ENCODE measurements at regions of chr7 and their contacts with region 1.

Region 1: DNA sequence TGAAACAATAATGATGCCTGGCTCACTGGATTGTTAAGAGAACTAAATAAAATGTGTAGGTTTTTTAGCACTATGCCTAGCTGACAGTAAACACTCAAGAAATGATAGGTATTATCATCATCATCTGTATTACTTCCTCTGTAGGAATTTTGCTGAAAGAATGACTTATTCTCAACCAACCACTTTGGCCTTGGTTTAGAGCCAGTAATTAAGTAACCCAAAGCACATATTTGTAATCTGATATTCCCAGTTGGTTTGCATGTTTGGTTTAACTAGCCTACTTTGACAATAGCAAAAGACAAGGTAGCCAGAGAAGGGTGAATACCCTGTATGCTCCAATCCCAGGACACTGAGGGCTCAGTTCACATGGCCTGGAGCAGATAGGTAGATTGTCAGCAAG is 34.4 kb downstream of the BCAP29 start:
- DNase-seq: no peak
- ATAC-seq: no peak
- H3K4me3 ChIP-seq: no peak overlapping the region
- H3K27ac ChIP-seq: peak overlapping the region in 1 of 10 donors; percentile 37
- H3K4me1 ChIP-seq: peaks cover 0 to 29% (median 12%) of the 10 kb centered on the region in 9 donors
- H3K27me3 ChIP-seq: no peaks in the 10 kb centered on the region
- CTCF ChIP-seq: no peak

Region 2: GRCh38 chr7:107461938-107462533 is 152.4 kb before region 1 on chr7:
- intact Hi-C with region 1: no loop called
- DNase-seq: no peak
- ATAC-seq: peak in 6 of 8 donors; percentile 17 to 78 (median 61)
- H3K4me3 ChIP-seq: no peak overlapping the region
- H3K27ac ChIP-seq: peak overlapping the region in 8 of 10 donors; percentile 8 to 65 (median 51)
- H3K4me1 ChIP-seq: peaks cover 0 to 39% (median 5%) of the 10 kb centered on the region in 9 donors
- H3K27me3 ChIP-seq: no peaks in the 10 kb centered on the region
- CTCF ChIP-seq: no peak

Region 3: DNA sequence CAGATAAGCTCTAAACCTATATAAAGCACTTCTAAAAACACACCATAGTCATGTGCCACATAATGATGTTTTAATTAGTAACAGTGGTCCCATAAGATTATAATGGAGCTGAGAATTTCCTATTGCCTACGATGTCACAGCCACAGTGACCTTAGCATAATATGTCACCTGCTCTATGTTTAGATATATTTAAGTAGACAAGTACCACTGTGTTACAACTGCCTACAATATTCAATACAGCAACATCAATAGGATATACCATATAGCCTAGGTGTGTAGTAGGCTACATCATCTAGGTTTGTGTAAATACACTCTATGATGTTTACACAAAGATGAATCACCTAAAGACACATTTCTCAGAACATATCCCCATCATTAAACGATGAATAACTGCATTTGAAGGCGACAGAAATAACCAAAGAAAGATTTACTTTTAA is 120.1 kb before region 1 on chr7:
- intact Hi-C with region 1: no loop called
- DNase-seq: no peak
- ATAC-seq: peak in 2 of 8 donors; percentile 62 to 68
- H3K4me3 ChIP-seq: no peak overlapping the region
- H3K27ac ChIP-seq: peak overlapping the region in 3 of 10 donors; percentile 8 to 35 (median 10)
- H3K4me1 ChIP-seq: peaks cover 0 to 16% (median 3%) of the 10 kb centered on the region in 9 donors
- H3K27me3 ChIP-seq: no peaks in the 10 kb centered on the region
- CTCF ChIP-seq: no peak

Region 4: DNA sequence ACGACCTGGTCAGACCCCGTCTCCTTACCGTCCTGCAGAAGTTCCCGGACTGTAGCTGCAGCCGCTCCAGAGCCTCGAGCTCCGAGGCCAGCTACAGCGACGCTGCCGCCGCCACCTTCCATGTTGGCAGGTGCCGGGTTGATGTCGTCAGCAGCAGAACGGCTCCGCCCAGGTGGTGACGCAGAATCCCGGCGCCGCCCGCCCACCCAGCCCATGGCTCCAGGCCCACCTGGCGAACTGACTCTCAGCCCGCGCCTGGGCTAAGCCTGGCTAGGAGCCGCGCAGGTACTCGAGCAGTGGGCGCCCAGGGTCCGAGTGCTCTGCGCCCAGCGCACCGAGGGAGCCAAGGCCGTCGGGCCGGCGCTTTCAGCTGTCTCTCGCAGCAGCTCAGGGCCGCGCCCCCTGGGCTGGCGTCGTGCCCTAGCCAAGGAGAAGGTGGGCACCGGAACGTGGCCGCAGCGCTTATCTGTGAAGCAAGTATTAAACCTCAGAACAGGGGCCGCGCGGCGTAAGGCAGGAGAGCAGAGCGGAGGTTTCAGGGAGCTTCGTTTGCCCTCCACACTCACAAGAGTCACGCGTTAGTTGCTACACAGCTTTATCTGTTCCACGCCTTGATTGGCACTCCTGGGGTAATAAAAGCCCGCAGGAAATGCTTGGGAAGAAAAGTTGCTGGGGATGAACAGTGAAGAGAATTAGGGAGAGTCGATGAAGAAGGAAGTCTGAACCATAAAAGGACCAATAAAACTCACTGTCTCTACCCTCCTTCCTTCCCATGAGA is 50.5 kb before region 1 on chr7 and contains the starts of genes COG5 and DUS4L:
- intact Hi-C with region 1: loop called in 1 of 10 experiments (anchors 5 kb)
- DNase-seq: peak; percentile 85 to 86
- ATAC-seq: peak; percentile 94 to 98 (median 96)
- H3K4me3 ChIP-seq: peak within 1 kb of the TSS; percentile 68 to 99 (median 87)
- H3K27ac ChIP-seq: peak within 1 kb of the TSS; percentile 88 to 98 (median 94)
- H3K4me1 ChIP-seq: peaks cover 0 to 57% (median 49%) of the 10 kb centered on the region in 9 donors
- H3K27me3 ChIP-seq: no peaks in the 10 kb centered on the region
- CTCF ChIP-seq: peak in 1 of 9 donors; percentile 3
- total RNA-seq, gene COG5: 44.2 to 65.8 (median 53.0) TPM
- total RNA-seq, gene DUS4L: 6.6 to 10.6 (median 9.0) TPM

Region 5: DNA sequence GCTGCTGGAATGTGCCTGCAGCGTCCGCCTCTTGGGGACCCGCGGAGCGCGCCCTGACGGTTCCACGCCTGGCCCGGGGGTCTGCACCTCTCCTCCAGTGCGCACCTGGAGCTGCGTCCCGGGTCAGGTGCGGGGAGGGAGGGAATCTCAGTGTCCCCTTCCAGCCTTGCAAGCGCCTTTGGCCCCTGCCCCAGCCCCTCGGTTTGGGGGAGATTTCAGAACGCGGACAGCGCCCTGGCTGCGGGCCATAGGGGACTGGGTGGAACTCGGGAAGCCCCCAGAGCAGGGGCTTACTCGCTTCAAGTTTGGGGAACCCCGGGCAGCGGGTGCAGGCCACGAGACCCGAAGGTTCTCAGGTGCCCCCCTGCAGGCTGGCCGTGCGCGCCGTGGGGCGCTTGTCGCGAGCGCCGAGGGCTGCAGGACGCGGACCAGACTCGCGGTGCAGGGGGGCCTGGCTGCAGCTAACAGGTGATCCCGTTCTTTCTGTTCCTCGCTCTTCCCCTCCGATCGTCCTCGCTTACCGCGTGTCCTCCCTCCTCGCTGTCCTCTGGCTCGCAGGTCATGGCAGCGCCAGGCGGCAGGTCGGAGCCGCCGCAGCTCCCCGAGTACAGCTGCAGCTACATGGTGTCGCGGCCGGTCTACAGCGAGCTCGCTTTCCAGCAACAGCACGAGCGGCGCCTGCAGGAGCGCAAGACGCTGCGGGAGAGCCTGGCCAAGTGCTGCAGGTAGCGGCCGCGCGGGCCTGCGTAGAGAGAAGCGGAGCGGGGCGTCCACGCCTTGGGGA is 46.8 kb after region 1 on chr7:
- intact Hi-C with region 1: no loop called
- DNase-seq: peak; percentile 19 to 54
- ATAC-seq: peak; percentile 75 to 91 (median 88)
- H3K4me3 ChIP-seq: peak overlapping the region; percentile 2 to 77 (median 54)
- H3K27ac ChIP-seq: no peak overlapping the region
- H3K4me1 ChIP-seq: peaks cover 0 to 19% (median 11%) of the 10 kb centered on the region in 9 donors
- H3K27me3 ChIP-seq: peaks cover 0 to 55% (median 23%) of the 10 kb centered on the region in 7 donors
- CTCF ChIP-seq: peak in 5 of 9 donors; percentile 10 to 47 (median 43)

Measured in heart right ventricle (tissue), 16 donors.